Natural killer cell (primary cell): ENCODE measurements at regions of chr12 and their contacts with region 1.

Region 1: DNA sequence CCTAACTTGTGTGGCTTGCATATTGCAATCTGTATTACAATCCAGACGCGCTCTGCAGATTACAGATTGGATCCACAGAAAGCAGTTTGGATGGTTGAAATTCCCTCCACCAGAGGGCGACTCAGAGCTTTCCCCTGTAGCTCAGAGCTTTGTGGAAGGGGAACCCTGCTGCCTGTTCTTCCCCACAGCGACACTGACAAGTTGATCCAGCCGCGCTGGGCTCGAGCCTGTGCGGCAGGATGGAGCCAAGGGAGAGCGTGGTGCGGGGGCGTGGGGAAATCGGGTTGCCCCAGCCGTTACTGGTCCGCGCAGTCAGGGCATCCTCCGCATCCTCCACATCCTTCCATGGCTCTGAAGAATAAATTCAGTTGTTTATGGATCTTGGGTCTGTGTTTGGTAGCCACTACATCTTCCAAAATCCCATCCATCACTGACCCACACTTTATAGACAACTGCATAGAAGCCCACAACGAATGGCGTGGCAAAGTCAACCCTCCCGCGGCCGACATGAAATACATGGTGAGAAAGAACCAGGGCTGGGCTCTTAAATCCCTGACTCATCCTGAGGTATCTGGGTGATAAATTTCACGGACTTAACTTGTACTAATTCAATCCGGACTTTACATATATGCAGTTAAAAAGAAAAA is at the start of gene GLIPR1L1:
- DNase-seq: peak; percentile 65 to 91
- ATAC-seq: peak; percentile 69 to 86 (median 70)
- H3K4me3 ChIP-seq: no peak within 1 kb of the TSS
- H3K4me3 Mint-ChIP-seq: peak within 1 kb of the TSS; percentile 79
- H3K27ac ChIP-seq: no peak within 1 kb of the TSS
- H3K27ac Mint-ChIP-seq: peak within 1 kb of the TSS in 1 of 2 donors; percentile 76
- H3K4me1 ChIP-seq: peaks cover 16% of the 10 kb centered on the region
- H3K4me1 Mint-ChIP-seq: peaks cover 19 to 20% of the 10 kb centered on the region in 2 donors
- H3K27me3 ChIP-seq: peaks cover 2% of the 10 kb centered on the region
- H3K27me3 Mint-ChIP-seq: peaks cover 17% of the 10 kb centered on the region in 2 donors
- CTCF ChIP-seq: peak; percentile 91
- total RNA-seq, gene GLIPR1L1: not detected

Region 2: GRCh38 chr12:75390899-75391538 is 56.5 kb after region 1 on chr12 and contains the start of gene GLIPR1L2:
- intact Hi-C with region 1: loop called (anchors 2 kb)
- DNase-seq: peak; percentile 79 to 95
- ATAC-seq: peak; percentile 91 to 97 (median 96)
- H3K4me3 ChIP-seq: peak within 1 kb of the TSS; percentile 70
- H3K4me3 Mint-ChIP-seq: peak within 1 kb of the TSS; percentile 92
- H3K27ac ChIP-seq: peak within 1 kb of the TSS; percentile 87
- H3K27ac Mint-ChIP-seq: peak within 1 kb of the TSS; percentile 92 to 94
- H3K4me1 ChIP-seq: peaks cover 4% of the 10 kb centered on the region
- H3K4me1 Mint-ChIP-seq: peaks cover 43 to 45% of the 10 kb centered on the region in 2 donors
- H3K27me3 ChIP-seq: no peaks in the 10 kb centered on the region
- H3K27me3 Mint-ChIP-seq: peaks cover 0 to 3% of the 10 kb centered on the region in 2 donors
- CTCF ChIP-seq: peak; percentile 69
- total RNA-seq, gene GLIPR1L2: 0.75 to 1.7 (median 1.6) TPM

Region 3: DNA sequence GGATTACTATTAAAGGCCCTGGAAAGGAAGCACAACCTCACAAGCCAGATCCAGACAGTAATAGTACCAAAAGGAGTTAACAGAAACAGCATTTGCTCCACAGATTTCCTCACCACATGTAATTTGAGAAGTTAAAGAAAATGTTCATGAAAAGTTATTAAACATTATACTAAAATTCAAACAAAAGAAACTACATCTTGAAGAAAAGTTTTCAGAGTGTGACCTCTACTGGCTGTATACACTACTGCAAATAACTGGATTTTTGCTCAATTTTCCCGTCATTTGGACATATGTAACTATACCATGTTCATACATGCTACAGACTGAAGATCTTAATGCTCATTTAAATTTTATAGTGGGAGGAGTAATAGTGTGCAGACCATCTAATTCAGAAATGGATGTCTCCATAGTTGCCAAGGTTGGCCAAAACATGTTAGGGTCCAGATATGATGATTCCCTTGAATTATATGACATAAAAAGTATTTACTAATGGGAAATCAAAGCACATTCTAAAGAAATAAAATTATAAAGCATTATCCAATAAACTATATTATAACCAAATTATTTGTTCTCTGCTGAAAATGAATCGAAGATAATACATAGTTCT is 171.3 kb after region 1 on chr12:
- intact Hi-C with region 1: loop called (anchors 1 kb)
- DNase-seq: peak in 1 of 2 donors; percentile 61
- ATAC-seq: peak; percentile 44 to 72 (median 58)
- H3K4me3 ChIP-seq: no peak overlapping the region
- H3K4me3 Mint-ChIP-seq: no peak overlapping the region
- H3K27ac ChIP-seq: no peak overlapping the region
- H3K27ac Mint-ChIP-seq: peak overlapping the region; percentile 54 to 65
- H3K4me1 ChIP-seq: no peaks in the 10 kb centered on the region
- H3K4me1 Mint-ChIP-seq: peaks cover 11 to 20% of the 10 kb centered on the region in 2 donors
- H3K27me3 ChIP-seq: no peaks in the 10 kb centered on the region
- H3K27me3 Mint-ChIP-seq: no peaks in the 10 kb centered on the region
- CTCF ChIP-seq: peak; percentile 76

Region 4: GRCh38 chr12:76348079-76348901 is 1013.8 kb after region 1 on chr12 and contains the start of gene BBS10:
- intact Hi-C with region 1: loop called (anchors 10 kb)
- DNase-seq: peak; percentile 74 to 92
- ATAC-seq: peak; percentile 97 to 99 (median 97)
- H3K4me3 ChIP-seq: peak within 1 kb of the TSS; percentile 65
- H3K4me3 Mint-ChIP-seq: peak within 1 kb of the TSS; percentile 93
- H3K27ac ChIP-seq: peak within 1 kb of the TSS; percentile 89
- H3K27ac Mint-ChIP-seq: peak within 1 kb of the TSS; percentile 84 to 91
- H3K4me1 ChIP-seq: peaks cover 9% of the 10 kb centered on the region
- H3K4me1 Mint-ChIP-seq: peaks cover 19 to 20% of the 10 kb centered on the region in 2 donors
- H3K27me3 ChIP-seq: no peaks in the 10 kb centered on the region
- H3K27me3 Mint-ChIP-seq: no peaks in the 10 kb centered on the region
- CTCF ChIP-seq: peak; percentile 36
- total RNA-seq, gene BBS10: 2.8 to 4.0 (median 3.3) TPM